ENCODE measurements at regions of chr13 and their contacts with region 1.

Region 1: DNA sequence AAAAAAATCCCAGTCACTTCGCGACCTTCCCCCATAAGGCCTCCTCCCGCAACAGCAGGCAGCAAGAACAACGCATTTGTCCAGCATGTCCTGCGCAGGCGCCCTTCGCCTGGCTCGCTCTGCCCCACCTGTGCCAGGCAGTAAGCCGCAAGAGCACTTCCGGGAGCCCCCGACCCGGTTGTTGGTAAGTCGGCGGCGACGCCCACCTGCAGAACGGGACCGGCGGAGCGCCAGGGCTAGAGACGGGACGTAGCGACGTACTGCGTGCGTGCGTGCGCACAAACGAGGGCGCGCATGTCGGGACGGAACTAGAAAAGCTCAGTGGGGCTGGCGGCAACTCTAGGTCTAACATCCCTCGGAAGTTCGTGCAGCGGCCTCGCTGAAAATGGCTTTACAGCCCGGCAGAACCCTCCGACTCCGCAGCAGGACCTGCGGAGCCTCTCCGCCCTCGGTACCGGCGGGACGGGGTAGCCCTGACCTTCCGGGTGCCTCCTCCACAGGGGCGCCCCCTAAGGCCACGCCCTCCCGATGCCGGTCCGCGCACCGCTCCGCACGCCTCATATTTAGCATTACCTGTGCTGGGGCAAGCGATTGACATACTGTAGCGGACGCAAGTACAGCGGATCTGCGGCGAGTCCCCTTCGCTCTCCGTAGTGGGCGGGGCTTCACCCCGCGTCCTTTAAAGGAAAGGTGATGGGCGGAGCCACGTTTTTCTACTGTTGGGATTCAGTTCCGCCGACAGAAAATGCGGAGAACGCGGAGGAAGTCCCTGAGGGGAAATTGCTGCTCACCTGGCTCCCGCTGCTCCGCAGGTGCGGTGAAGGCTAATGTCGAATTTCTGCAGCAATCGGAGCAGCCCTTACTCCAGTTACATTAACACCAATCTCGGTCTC is at the start of gene MTIF3:
- DNase-seq: peak; percentile 95 to 99 (median 97)
- ATAC-seq: peak; percentile 79
- H3K4me3 ChIP-seq: peak within 1 kb of the TSS; percentile 83
- H3K4me3 Mint-ChIP-seq: peak within 1 kb of the TSS; percentile 98
- H3K27ac ChIP-seq: peak within 1 kb of the TSS; percentile 95 to 97
- H3K27ac Mint-ChIP-seq: peak within 1 kb of the TSS; percentile 97
- H3K4me1 ChIP-seq: peaks cover 58% of the 10 kb centered on the region
- H3K4me1 Mint-ChIP-seq: peaks cover 74% of the 10 kb centered on the region
- H3K27me3 ChIP-seq: no peaks in the 10 kb centered on the region
- H3K27me3 Mint-ChIP-seq: no peaks in the 10 kb centered on the region
- CTCF ChIP-seq: peak; percentile 31
- total RNA-seq, gene MTIF3: 13.6 to 14.5 TPM

Region 2: DNA sequence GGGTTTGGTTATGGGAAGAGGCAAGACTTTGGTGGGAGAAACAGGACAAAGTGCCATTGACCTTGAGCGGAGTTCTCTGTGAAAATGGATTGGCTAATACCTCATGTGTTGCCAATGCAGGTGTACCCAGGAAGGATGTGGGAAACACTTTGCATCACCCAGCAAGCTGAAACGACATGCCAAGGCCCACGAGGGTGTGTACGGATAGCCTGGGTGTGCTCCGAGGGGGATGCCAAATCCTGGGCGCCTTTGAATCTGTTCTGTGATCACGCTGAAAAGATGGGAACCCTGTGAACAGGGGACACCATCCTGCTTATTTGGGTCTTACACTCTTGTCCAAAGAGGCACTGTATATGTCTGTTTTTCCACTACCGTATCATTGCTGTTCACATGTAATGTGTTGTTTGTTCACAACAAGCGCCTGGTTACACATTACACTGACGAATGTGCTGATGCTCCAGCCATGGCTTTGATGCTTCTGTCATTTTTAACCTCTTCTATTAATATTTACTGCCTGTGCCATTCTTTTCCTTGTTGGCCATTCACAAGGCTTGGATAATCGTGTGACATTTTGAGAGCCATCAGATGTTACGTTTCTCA is 17.5 kb before region 1 on chr13:
- CTCF ChIA-PET with region 1: interaction called, 26 read pairs
- POLR2A ChIA-PET with region 1: interaction called, 389 read pairs
- intact Hi-C with region 1: no loop called
- DNase-seq: peak in 5 of 14 experiments; percentile 11 to 75 (median 50)
- ATAC-seq: peak; percentile 79
- H3K4me3 ChIP-seq: no peak overlapping the region
- H3K4me3 Mint-ChIP-seq: peak overlapping the region; percentile 35
- H3K27ac ChIP-seq: peak overlapping the region in 1 of 2 donors; percentile 24
- H3K27ac Mint-ChIP-seq: peak overlapping the region; percentile 88
- H3K4me1 ChIP-seq: peaks cover 28% of the 10 kb centered on the region
- H3K4me1 Mint-ChIP-seq: peaks cover 47% of the 10 kb centered on the region
- H3K27me3 ChIP-seq: no peaks in the 10 kb centered on the region
- H3K27me3 Mint-ChIP-seq: no peaks in the 10 kb centered on the region
- CTCF ChIP-seq: no peak

Region 3: GRCh38 chr13:27481766-27482165 is 31.6 kb after region 1 on chr13:
- CTCF ChIA-PET with region 1: no interaction called
- POLR2A ChIA-PET with region 1: interaction called, 36 read pairs
- intact Hi-C with region 1: loop called in 1 of 2 experiments (anchors 2 kb)
- DNase-seq: peak in 5 of 14 experiments; percentile 5 to 35 (median 16)
- ATAC-seq: no peak
- H3K4me3 ChIP-seq: no peak overlapping the region
- H3K4me3 Mint-ChIP-seq: no peak overlapping the region
- H3K27ac ChIP-seq: no peak overlapping the region
- H3K27ac Mint-ChIP-seq: no peak overlapping the region
- H3K4me1 ChIP-seq: peaks cover 6% of the 10 kb centered on the region
- H3K4me1 Mint-ChIP-seq: peaks cover 19% of the 10 kb centered on the region
- H3K27me3 ChIP-seq: no peaks in the 10 kb centered on the region
- H3K27me3 Mint-ChIP-seq: no peaks in the 10 kb centered on the region
- CTCF ChIP-seq: peak; percentile 30

Region 4: DNA sequence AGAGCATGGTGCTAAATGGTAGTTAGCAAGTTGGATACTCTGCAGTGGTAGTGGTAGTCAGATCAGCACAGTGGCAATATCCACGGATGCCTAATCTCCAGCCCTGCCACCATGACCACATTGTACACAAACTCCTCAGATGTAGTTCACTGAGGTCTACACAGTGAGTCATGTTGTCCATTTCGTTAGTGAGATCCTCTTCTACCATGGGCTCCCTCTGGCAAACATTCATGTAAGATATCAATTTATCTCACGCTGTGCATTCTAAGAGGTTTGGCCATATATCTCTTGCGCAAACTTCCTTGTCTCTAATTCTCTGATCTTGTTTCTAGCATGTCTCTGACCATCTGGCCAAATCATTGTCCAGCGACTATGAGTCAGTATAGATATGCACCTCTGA is 229.7 kb after region 1 on chr13:
- CTCF ChIA-PET with region 1: no interaction called
- POLR2A ChIA-PET with region 1: no interaction called
- intact Hi-C with region 1: no loop called
- DNase-seq: no peak
- ATAC-seq: no peak
- H3K4me3 ChIP-seq: no peak overlapping the region
- H3K4me3 Mint-ChIP-seq: no peak overlapping the region
- H3K27ac ChIP-seq: no peak overlapping the region
- H3K27ac Mint-ChIP-seq: no peak overlapping the region
- H3K4me1 ChIP-seq: no peaks in the 10 kb centered on the region
- H3K4me1 Mint-ChIP-seq: no peaks in the 10 kb centered on the region
- H3K27me3 ChIP-seq: peaks cover 5 to 12% of the 10 kb centered on the region in 2 experiments
- H3K27me3 Mint-ChIP-seq: peaks cover 18% of the 10 kb centered on the region
- CTCF ChIP-seq: no peak

Region 5: GRCh38 chr13:28100150-28101121 is 650.3 kb after region 1 on chr13 and contains the start of gene FLT3:
- CTCF ChIA-PET with region 1: no interaction called
- POLR2A ChIA-PET with region 1: no interaction called
- intact Hi-C with region 1: no loop called
- DNase-seq: peak in 5 of 14 experiments; percentile 13 to 70 (median 38)
- ATAC-seq: peak; percentile 52
- H3K4me3 ChIP-seq: peak within 1 kb of the TSS; percentile 26
- H3K4me3 Mint-ChIP-seq: peak within 1 kb of the TSS; percentile 77
- H3K27ac ChIP-seq: no peak within 1 kb of the TSS
- H3K27ac Mint-ChIP-seq: no peak within 1 kb of the TSS
- H3K4me1 ChIP-seq: peaks cover 13% of the 10 kb centered on the region
- H3K4me1 Mint-ChIP-seq: peaks cover 7% of the 10 kb centered on the region
- H3K27me3 ChIP-seq: peaks cover 29 to 47% of the 10 kb centered on the region in 2 experiments
- H3K27me3 Mint-ChIP-seq: peaks cover 68% of the 10 kb centered on the region
- CTCF ChIP-seq: no peak
- total RNA-seq, gene FLT3: 0.39 to 0.55 TPM

Region 6: GRCh38 chr13:28161370-28161769 is 711.2 kb after region 1 on chr13:
- CTCF ChIA-PET with region 1: no interaction called
- POLR2A ChIA-PET with region 1: no interaction called
- intact Hi-C with region 1: no loop called
- DNase-seq: no peak
- ATAC-seq: no peak
- H3K4me3 ChIP-seq: no peak overlapping the region
- H3K4me3 Mint-ChIP-seq: no peak overlapping the region
- H3K27ac ChIP-seq: no peak overlapping the region
- H3K27ac Mint-ChIP-seq: peak overlapping the region; percentile 9
- H3K4me1 ChIP-seq: peaks cover 15% of the 10 kb centered on the region
- H3K4me1 Mint-ChIP-seq: peaks cover 83% of the 10 kb centered on the region
- H3K27me3 ChIP-seq: no peaks in the 10 kb centered on the region
- H3K27me3 Mint-ChIP-seq: no peaks in the 10 kb centered on the region
- CTCF ChIP-seq: no peak

Measured in CD4-positive, alpha-beta T cell (primary cell).